Heart left ventricle (tissue), 16 donors: ENCODE measurements at regions of chr13 and their contacts with region 1.

Region 1: DNA sequence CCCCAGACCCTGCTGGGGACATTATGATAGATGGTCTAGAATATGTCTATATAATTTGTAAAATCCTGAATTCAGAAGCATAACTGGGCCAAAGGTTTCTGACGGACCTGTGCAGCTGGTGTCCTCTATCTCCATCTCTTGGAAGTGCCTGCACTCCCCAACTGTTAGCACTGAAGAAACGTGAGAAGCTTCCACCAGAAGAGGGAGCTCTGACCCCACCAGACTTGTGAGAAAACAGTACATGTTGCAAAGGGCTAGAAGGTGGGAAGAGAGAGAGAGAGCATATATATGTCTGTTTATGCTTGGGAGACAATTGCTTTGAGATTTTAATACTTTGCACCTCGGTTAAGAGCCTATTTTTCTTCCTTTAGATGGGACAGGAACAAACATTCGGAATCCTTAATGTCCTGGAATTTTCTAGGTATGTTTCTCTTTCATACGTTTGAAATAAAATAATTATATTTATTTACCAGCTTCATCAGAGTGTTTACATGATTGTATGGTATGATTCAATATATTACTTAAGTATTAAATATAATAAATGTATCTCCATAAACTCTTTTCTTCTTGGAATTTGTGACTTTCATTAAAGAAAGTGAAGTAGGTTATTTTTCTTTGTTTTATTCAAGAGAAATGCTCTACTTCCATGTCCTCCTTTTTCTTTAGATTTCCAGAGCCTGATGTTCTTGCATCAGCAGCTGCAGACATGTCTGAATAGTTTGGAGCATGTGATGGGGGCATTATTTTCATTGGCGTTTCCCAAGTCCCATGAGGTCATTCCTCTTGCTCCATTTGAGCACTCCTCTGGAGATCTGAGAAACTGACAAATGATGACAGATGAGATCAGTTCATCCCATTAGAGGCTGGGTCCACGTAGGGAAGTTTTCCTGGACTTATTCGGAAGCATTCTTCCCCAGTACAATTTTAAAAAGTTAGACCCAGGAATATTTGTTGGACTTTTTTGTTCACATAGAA is 202.9 kb downstream of the ATP8A2 start:
- DNase-seq: peak in 4 of 5 donors; percentile 71 to 77 (median 75)
- ATAC-seq: peak; percentile 82 to 97 (median 92)
- H3K4me3 ChIP-seq: no peak overlapping the region
- H3K27ac ChIP-seq: no peak overlapping the region
- H3K4me1 ChIP-seq: no peaks in the 10 kb centered on the region
- H3K27me3 ChIP-seq: peaks cover 0 to 56% (median 8%) of the 10 kb centered on the region in 9 donors
- CTCF ChIP-seq: peak; percentile 66 to 91 (median 79)
- POLR2A ChIP-seq: no peak

Region 2: GRCh38 chr13:26062844-26063444 is 488.2 kb after region 1 on chr13:
- intact Hi-C with region 1: loop called (anchors 2 to 5 kb)
- DNase-seq: peak in 2 of 5 donors; percentile 29 to 44
- ATAC-seq: peak in 3 of 4 donors; percentile 47 to 84 (median 77)
- H3K4me3 ChIP-seq: no peak overlapping the region
- H3K27ac ChIP-seq: no peak overlapping the region
- H3K4me1 ChIP-seq: no peaks in the 10 kb centered on the region
- H3K27me3 ChIP-seq: peaks cover 0 to 8% (median 0%) of the 10 kb centered on the region in 9 donors
- CTCF ChIP-seq: peak; percentile 54 to 79 (median 68)
- POLR2A ChIP-seq: no peak

Region 3: GRCh38 chr13:26074706-26075105 is 500.0 kb after region 1 on chr13:
- intact Hi-C with region 1: loop called in 2 of 10 experiments (anchors 2 kb)
- DNase-seq: no peak
- ATAC-seq: peak in 2 of 4 donors; percentile 28 to 44
- H3K4me3 ChIP-seq: no peak overlapping the region
- H3K27ac ChIP-seq: no peak overlapping the region
- H3K4me1 ChIP-seq: no peaks in the 10 kb centered on the region
- H3K27me3 ChIP-seq: peaks cover 0 to 22% (median 4%) of the 10 kb centered on the region in 9 donors
- CTCF ChIP-seq: no peak
- POLR2A ChIP-seq: no peak